Esophagus muscularis mucosa (tissue), 4 donors: ENCODE measurements at regions of chr3 and their contacts with region 1.

Region 1: GRCh38 chr3:47475570-47476329 is at the start of gene SCAP:
- DNase-seq: peak; percentile 98
- H3K4me3 ChIP-seq: peak within 1 kb of the TSS; percentile 73 to 100 (median 82)
- H3K27ac ChIP-seq: peak within 1 kb of the TSS; percentile 81 to 88 (median 85)
- H3K4me1 ChIP-seq: peaks cover 24 to 37% (median 31%) of the 10 kb centered on the region in 4 donors
- H3K27me3 ChIP-seq: no peaks in the 10 kb centered on the region
- CTCF ChIP-seq: peak in 2 of 3 experiments; percentile 98 to 99
- EP300 ChIP-seq: no peak
- POLR2A ChIP-seq: no peak
- total RNA-seq, gene SCAP: 67.6 to 104 (median 79.9) TPM

Region 2: GRCh38 chr3:47380601-47381316 is 95.0 kb before region 1 on chr3 and contains the start of gene PTPN23:
- intact Hi-C with region 1: loop called (anchors 2 kb)
- DNase-seq: peak; percentile 99
- H3K4me3 ChIP-seq: peak within 1 kb of the TSS; percentile 92 to 100 (median 96)
- H3K27ac ChIP-seq: peak within 1 kb of the TSS; percentile 95 to 99 (median 98)
- H3K4me1 ChIP-seq: peaks cover 30 to 58% (median 47%) of the 10 kb centered on the region in 4 donors
- H3K27me3 ChIP-seq: no peaks in the 10 kb centered on the region
- CTCF ChIP-seq: peak in 1 of 3 experiments; percentile 22
- EP300 ChIP-seq: no peak
- POLR2A ChIP-seq: peak; percentile 87
- total RNA-seq, gene PTPN23: 16.9 to 156 (median 26.3) TPM

Region 3: GRCh38 chr3:47420511-47421484 is 55.0 kb before region 1 on chr3:
- intact Hi-C with region 1: loop called (anchors 1 kb)
- DNase-seq: peak; percentile 96
- H3K4me3 ChIP-seq: peak overlapping the region in 1 of 4 donors; percentile 21
- H3K27ac ChIP-seq: peak overlapping the region; percentile 43 to 71 (median 60)
- H3K4me1 ChIP-seq: peaks cover 15 to 23% (median 16%) of the 10 kb centered on the region in 4 donors
- H3K27me3 ChIP-seq: no peaks in the 10 kb centered on the region
- CTCF ChIP-seq: peak; percentile 91 to 97 (median 92)
- EP300 ChIP-seq: no peak
- POLR2A ChIP-seq: no peak